ENCODE measurements at regions of chr11 and their contacts with region 1.

Region 1: GRCh38 chr11:36672813-36673450 is 74.9 kb upstream of the RAG2 start:
- DNase-seq: no peak
- ATAC-seq: no peak
- H3K4me3 Mint-ChIP-seq: no peak overlapping the region
- H3K27ac Mint-ChIP-seq: no peak overlapping the region
- H3K4me1 Mint-ChIP-seq: no peaks in the 10 kb centered on the region
- H3K27me3 Mint-ChIP-seq: peaks cover 24% of the 10 kb centered on the region

Region 2: DNA sequence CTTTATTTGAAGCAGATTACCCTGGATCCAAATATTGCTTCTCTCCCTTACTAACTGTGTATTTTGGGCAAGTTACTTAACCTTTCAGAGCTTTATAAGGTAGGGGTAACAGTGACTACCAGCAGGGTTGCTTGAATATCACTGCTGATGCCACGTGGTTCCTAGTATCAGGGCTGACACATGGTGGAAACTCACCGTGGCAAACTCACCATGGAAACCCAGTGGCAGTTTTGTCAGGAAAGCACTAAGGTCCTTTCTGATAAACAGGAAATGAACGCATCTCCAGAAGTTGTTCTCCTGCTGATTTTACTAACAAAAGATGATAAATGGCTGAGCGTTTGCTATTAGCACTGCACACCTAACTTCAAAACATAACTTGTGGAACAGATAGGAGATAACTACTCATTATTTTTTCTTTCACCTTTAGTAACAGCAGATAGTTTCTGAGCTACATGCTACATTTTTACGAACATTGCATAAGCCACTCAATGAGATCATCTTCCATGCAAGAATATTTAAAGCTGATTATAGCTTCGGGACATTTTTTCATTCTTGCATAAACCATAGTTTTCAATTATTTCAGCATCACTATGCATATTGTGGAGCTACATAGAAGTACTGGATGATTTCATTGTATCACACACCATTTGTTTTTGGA is 15.2 kb before region 1 on chr11:
- CTCF ChIA-PET with region 1: interaction called, 13 read pairs
- POLR2A ChIA-PET with region 1: no interaction called
- intact Hi-C with region 1: no loop called
- DNase-seq: peak; percentile 27
- ATAC-seq: no peak
- H3K4me3 Mint-ChIP-seq: no peak overlapping the region
- H3K27ac Mint-ChIP-seq: no peak overlapping the region
- H3K4me1 Mint-ChIP-seq: no peaks in the 10 kb centered on the region
- H3K27me3 Mint-ChIP-seq: no peaks in the 10 kb centered on the region

Region 3: DNA sequence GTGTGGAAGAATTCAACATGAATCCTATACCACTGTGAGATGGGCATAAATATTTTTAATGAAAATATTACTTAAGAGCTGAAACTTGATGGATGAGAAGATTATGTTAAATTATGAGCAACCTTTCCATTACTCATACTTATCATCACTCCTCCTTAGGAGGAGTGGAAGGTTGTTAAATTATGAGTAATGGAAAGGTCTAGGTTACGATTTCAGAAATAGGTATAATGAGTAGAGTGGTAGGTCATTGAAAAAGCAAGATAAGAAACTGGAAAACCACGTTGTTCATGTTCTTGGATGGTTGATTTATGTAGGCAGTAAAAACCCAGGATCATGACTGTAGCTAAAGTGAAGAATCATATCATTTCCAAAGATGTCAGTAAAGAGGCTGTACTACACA is 898.3 kb after region 1 on chr11:
- CTCF ChIA-PET with region 1: no interaction called
- POLR2A ChIA-PET with region 1: no interaction called
- intact Hi-C with region 1: no loop called
- DNase-seq: no peak
- ATAC-seq: no peak
- H3K4me3 Mint-ChIP-seq: no peak overlapping the region
- H3K27ac Mint-ChIP-seq: no peak overlapping the region
- H3K4me1 Mint-ChIP-seq: no peaks in the 10 kb centered on the region
- H3K27me3 Mint-ChIP-seq: no peaks in the 10 kb centered on the region